Brain microvascular endothelial cell (primary cell): ENCODE measurements at regions of chr19 and their contacts with region 1.

Region 1: GRCh38 chr19:17522988-17523872 is 11.8 kb downstream of the PGLS start:
- DNase-seq: no peak
- H3K4me3 ChIP-seq: no peak overlapping the region
- H3K27ac ChIP-seq: no peak overlapping the region
- H3K27me3 ChIP-seq: no peaks in the 10 kb centered on the region
- CTCF ChIP-seq: no peak

Region 2: GRCh38 chr19:17950310-17951156 is 427.3 kb after region 1 on chr19:
- in situ Hi-C with region 1: loop called (anchors 10 kb)
- DNase-seq: no peak
- H3K4me3 ChIP-seq: no peak overlapping the region
- H3K27ac ChIP-seq: no peak overlapping the region
- H3K27me3 ChIP-seq: peaks cover 56% of the 10 kb centered on the region
- CTCF ChIP-seq: no peak